ENCODE measurements at regions of chr11 and their contacts with region 1.

Region 1: GRCh38 chr11:4187055-4187988 is 92.7 kb downstream of the RRM1 start:
- DNase-seq: peak; percentile 94
- H3K4me3 ChIP-seq: peak overlapping the region; percentile 58 to 66
- H3K27ac ChIP-seq: no peak overlapping the region
- H3K4me1 ChIP-seq: peaks cover 0 to 3% of the 10 kb centered on the region in 2 experiments; a peak in 1 of 4 replicates
- H3K27me3 ChIP-seq: peaks cover 23% of the 10 kb centered on the region; the same call in 1 of the 2 replicates
- CTCF ChIP-seq: peak; percentile 74
- EP300 ChIP-seq: no peak; a peak in 1 of 4 replicates
- RAD21 ChIP-seq: peak; percentile 92

Region 2: DNA sequence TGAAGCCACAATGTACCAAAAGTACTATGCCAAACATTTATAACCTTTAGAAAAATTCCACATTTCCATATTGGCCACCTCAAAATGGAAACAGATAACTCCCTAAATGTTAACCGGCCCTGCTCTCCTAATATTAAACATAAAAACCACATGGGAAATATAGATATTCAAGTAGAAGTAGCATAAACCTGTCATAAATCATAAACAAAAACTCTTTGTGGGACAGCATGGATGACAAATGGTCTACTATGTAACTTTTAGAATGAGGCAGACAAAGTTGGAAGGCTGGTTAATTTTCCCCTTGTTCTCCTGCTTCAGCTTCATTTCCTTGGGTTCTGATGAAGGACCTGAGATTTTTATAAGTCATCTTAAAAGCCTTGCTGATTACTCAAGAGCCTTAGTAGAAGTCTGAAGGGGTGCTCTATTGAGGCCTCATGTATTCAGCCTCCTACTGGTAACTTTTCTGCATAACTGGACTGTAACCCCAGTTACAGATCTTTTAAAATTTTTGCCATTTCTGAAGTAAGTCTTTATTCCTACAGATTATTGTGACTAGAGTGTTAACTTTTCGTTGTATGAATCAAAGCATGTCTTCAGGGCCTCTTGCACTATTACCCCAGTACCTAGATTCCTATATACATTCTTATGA is 215.4 kb before region 1 on chr11:
- CTCF ChIA-PET with region 1: no interaction called
- POLR2A ChIA-PET with region 1: no interaction called
- DNase-seq: no peak
- H3K4me3 ChIP-seq: no peak overlapping the region
- H3K27ac ChIP-seq: no peak overlapping the region
- H3K4me1 ChIP-seq: no peaks in the 10 kb centered on the region
- H3K27me3 ChIP-seq: no peaks in the 10 kb centered on the region
- CTCF ChIP-seq: peak; percentile 14; the same call in 1 of the 2 replicates
- EP300 ChIP-seq: no peak
- RAD21 ChIP-seq: no peak

Region 3: DNA sequence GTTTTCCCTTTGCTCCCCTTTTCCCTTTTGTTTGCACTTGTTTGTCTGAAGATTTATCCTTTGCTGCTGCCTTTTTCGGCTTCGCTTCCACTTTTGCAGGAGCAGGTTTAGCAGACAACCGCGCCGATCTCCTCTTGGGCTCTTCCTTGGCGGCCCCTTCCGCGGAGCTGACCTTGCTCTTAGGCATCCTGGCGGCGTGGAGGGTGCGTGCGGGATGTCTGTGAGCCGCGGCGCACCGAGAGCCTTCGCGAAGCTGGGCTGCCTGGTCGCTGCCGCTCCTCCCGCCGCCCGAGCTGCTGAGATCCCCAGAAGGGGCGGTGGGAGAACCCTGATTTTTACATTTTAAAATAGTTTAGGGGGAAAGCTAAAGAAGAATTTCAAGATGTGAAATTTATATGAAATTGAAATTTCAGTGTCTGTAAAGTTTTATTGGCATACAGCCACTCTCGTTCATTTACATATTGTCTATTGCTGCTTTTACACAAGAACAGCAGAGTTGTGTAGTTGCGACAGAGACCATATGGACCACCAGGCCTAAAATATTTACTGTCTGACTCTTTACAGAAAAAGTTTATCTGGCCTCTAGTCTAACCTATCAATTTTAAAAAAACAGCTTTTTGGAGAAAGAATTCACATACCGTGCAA is 197.9 kb before region 1 on chr11:
- CTCF ChIA-PET with region 1: no interaction called
- POLR2A ChIA-PET with region 1: no interaction called
- DNase-seq: no peak
- H3K4me3 ChIP-seq: no peak overlapping the region
- H3K27ac ChIP-seq: no peak overlapping the region
- H3K4me1 ChIP-seq: peaks cover 0 to 2% of the 10 kb centered on the region in 2 experiments; a peak in 1 of 4 replicates
- H3K27me3 ChIP-seq: no peaks in the 10 kb centered on the region
- CTCF ChIP-seq: no peak
- EP300 ChIP-seq: no peak
- RAD21 ChIP-seq: no peak

Region 4: DNA sequence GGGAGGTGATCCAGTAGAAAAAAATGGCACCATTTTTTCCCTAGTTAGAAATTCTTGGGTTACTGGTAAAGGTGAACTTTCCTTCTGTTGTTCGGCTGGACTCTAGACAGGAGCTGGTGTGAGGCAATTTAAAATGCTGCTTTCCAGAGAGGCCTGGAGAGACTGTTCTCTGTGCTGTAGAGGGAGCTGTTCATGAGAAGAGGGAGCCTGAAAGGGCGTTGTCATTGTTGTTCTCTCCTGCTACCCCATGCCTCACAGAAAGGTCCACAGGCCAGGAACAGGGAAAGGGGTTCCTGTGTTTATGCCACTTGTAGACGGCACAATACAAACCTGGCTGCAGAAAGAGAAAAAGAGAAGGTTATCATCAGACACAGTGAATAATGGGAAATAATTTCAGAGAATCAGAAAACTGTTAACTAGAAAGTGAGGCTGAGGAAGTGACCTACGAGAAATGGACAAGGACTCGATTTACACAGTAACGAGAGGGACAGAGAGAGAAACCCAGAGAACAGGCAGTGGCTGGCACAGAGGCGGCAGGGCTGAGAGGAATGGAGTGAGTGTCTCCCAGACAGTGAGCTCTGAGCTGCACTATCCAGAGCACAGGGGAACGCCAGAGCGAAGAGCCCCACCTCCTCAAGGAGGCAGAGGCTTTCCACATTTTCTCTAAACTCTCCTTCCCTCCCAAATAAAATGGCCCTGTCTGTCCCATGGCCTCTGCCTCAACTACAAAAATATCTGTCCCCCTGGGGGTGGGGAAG is 16.5 kb after region 1 on chr11:
- CTCF ChIA-PET with region 1: interaction called, 29 read pairs
- POLR2A ChIA-PET with region 1: no interaction called
- DNase-seq: no peak
- H3K4me3 ChIP-seq: peak overlapping the region in 1 of 2 experiments; percentile 6; a peak in 1 of 4 replicates
- H3K27ac ChIP-seq: no peak overlapping the region
- H3K4me1 ChIP-seq: no peaks in the 10 kb centered on the region
- H3K27me3 ChIP-seq: peaks cover 27% of the 10 kb centered on the region; the same call in 1 of the 2 replicates
- CTCF ChIP-seq: no peak
- EP300 ChIP-seq: no peak
- RAD21 ChIP-seq: no peak

Region 5: GRCh38 chr11:4496557-4497275 is 309.4 kb after region 1 on chr11:
- CTCF ChIA-PET with region 1: interaction called, 121 read pairs
- POLR2A ChIA-PET with region 1: no interaction called
- DNase-seq: no peak
- H3K4me3 ChIP-seq: no peak overlapping the region
- H3K27ac ChIP-seq: no peak overlapping the region
- H3K4me1 ChIP-seq: no peaks in the 10 kb centered on the region; a peak in 1 of 4 replicates
- H3K27me3 ChIP-seq: peaks cover 49% of the 10 kb centered on the region
- CTCF ChIP-seq: no peak
- EP300 ChIP-seq: no peak
- RAD21 ChIP-seq: no peak

Region 6: DNA sequence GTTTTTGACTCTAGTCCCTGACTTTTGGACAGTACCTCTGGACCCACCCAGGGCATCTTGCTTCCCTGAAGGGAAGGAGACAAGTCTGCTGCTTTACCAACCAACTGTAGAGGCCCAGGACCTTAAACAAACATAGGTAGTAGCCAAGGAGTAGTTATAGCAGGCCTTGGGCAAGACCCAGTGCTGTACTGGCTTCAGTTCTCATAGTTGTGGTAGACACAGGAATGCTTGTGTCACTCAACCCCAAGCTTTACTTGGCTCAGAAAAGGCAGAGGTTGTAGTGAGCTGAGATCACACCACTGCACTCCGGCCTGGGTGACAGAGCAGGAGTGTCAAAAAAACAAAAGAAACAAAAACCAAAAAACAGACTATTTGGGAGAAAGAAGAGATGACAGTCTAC is 336.3 kb after region 1 on chr11:
- CTCF ChIA-PET with region 1: interaction called, 10 read pairs
- POLR2A ChIA-PET with region 1: no interaction called
- DNase-seq: no peak
- H3K4me3 ChIP-seq: no peak overlapping the region
- H3K27ac ChIP-seq: no peak overlapping the region
- H3K4me1 ChIP-seq: no peaks in the 10 kb centered on the region
- H3K27me3 ChIP-seq: no peaks in the 10 kb centered on the region; the same call in 1 of the 2 replicates
- CTCF ChIP-seq: no peak
- EP300 ChIP-seq: no peak
- RAD21 ChIP-seq: no peak

Region 7: GRCh38 chr11:4551346-4551979 is 364.1 kb after region 1 on chr11:
- CTCF ChIA-PET with region 1: interaction called, 22 read pairs
- POLR2A ChIA-PET with region 1: no interaction called
- DNase-seq: peak; percentile 5
- H3K4me3 ChIP-seq: no peak overlapping the region
- H3K27ac ChIP-seq: no peak overlapping the region
- H3K4me1 ChIP-seq: no peaks in the 10 kb centered on the region
- H3K27me3 ChIP-seq: no peaks in the 10 kb centered on the region
- CTCF ChIP-seq: peak; percentile 52
- EP300 ChIP-seq: no peak
- RAD21 ChIP-seq: no peak